ENCODE measurements at regions of chr9 and their contacts with region 1.

Region 1: DNA sequence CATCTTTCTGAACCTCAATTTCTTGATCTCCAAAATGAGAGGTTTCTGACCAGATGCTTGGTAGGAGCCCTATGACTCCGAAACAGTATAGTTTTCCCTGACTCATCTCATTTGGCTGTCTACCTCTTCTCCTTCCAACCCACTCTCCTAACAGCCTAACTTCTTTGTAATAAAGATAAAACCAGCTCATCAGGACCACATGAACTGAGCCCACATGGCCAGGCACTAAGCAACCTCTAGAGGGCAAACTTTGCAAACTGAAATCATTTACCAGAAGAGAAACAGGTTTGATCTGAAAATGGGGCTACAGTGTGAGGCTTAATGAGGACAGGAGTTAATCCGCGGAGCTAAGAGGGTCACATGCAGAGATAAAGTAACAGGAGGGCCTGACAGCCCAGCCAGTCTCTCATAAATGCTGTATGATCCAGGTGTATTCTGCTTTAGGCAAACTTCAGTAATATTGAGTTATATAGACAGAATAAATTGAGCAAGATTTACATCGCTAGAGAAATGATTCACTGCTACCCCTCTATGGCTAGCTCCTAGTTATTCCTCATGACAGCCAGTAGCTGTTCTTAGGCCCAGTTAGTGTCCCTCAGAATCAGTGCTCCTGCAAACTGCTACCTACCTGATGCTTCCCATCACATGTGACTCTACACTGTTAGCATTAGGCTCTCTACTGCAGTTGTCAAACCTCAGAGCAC is 64.6 kb downstream of the ABCA1 start:
- DNase-seq: peak; percentile 82
- H3K4me3 ChIP-seq: no peak overlapping the region
- H3K27ac ChIP-seq: peak overlapping the region; percentile 12 to 51; a peak in 2 of 4 replicates
- H3K4me1 ChIP-seq: peaks cover 16 to 23% of the 10 kb centered on the region in 2 experiments; a peak in 3 of 4 replicates
- H3K27me3 ChIP-seq: no peaks in the 10 kb centered on the region
- CTCF ChIP-seq: peak; percentile 95
- EP300 ChIP-seq: no peak
- RAD21 ChIP-seq: peak; percentile 92

Region 2: DNA sequence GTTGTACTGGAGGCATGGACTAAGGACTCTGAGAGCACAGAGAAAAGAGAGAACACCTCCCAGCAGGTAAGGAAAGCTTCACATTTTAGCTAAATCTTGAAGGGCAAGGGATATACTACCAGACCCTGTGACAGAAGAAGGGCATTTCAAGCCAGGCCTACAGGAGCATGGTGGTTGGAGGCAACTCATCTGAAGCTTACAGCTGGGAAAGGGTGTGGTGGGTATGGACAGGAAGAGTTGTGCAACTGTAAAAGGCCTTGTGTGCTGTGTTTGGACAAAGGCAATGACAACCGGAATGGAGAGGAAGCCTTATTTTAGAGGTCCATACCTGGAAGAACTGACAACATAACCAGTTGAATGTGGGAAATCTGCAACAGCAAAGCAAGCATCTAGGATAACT is 68.2 kb before region 1 on chr9:
- CTCF ChIA-PET with region 1: interaction called, 13 read pairs
- POLR2A ChIA-PET with region 1: no interaction called
- DNase-seq: no peak
- H3K4me3 ChIP-seq: no peak overlapping the region
- H3K27ac ChIP-seq: no peak overlapping the region
- H3K4me1 ChIP-seq: peaks cover 0 to 43% of the 10 kb centered on the region in 2 experiments; a peak in 2 of 4 replicates
- H3K27me3 ChIP-seq: no peaks in the 10 kb centered on the region
- CTCF ChIP-seq: no peak
- EP300 ChIP-seq: no peak
- RAD21 ChIP-seq: no peak

Region 3: GRCh38 chr9:104843644-104844240 is 19.6 kb before region 1 on chr9:
- CTCF ChIA-PET with region 1: interaction called, 23 read pairs
- POLR2A ChIA-PET with region 1: no interaction called
- DNase-seq: peak; percentile 60
- H3K4me3 ChIP-seq: no peak overlapping the region
- H3K27ac ChIP-seq: peak overlapping the region in 1 of 2 experiments; percentile 69; a peak in 2 of 4 replicates
- H3K4me1 ChIP-seq: peaks cover 0 to 20% of the 10 kb centered on the region in 2 experiments; a peak in 2 of 4 replicates
- H3K27me3 ChIP-seq: no peaks in the 10 kb centered on the region
- CTCF ChIP-seq: no peak
- EP300 ChIP-seq: peak in 1 of 2 experiments; percentile 49; a peak in 1 of 4 replicates
- RAD21 ChIP-seq: peak; percentile 13; the same call in 1 of the 2 replicates

Region 4: DNA sequence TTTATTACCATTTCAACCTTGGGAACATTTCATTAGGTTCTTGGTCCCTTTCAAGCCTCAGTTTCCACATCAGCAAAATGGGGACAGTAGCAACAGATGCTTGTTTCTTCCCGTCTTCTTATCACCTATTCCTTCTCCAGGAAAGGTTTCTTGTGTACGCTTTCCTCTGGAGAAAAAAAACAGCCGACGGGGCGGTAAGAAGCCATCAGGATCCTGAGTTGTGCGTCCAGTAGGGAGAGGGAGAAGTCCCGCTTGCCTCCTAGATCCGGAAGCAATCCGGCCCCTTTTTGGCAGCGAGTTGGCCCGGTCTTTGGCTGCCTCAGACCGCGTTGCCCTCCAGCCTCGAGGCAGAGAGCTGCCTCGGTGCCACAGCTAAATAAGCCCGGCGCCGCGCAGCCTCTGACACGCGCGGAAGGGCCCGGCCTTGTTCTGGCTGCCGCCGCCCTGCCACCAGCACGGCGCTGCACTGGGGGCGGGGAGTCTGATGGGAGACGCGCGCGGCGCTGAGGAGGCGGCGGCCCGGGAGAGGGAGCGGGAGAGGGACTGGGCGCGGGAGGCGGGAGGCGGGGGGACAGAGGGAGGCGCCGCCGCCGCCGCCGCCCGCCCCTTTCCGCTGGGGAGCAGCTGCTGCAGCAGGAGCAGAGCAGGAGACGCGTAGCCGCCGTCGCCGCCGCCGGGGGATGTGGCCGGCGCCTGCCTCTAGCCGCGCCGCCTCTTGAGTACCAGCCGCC is 380.8 kb after region 1 on chr9 and contains the start of gene SLC44A1:
- CTCF ChIA-PET with region 1: interaction called, 10 read pairs
- POLR2A ChIA-PET with region 1: no interaction called
- DNase-seq: peak; percentile 94
- H3K4me3 ChIP-seq: peak within 1 kb of the TSS; percentile 88 to 90
- H3K27ac ChIP-seq: peak within 1 kb of the TSS; percentile 66 to 79
- H3K4me1 ChIP-seq: peaks cover 3 to 11% of the 10 kb centered on the region in 2 experiments; a peak in 3 of 4 replicates
- H3K27me3 ChIP-seq: no peaks in the 10 kb centered on the region
- CTCF ChIP-seq: no peak
- EP300 ChIP-seq: peak; percentile 19 to 64; a peak in 2 of 4 replicates
- RAD21 ChIP-seq: no peak; the same call in 1 of the 2 replicates
- polyA plus RNA-seq, gene SLC44A1: 4.5 and 5.9 TPM in 2 replicates

Measured in SK-N-SH (cell line).